Pancreas (tissue), 10 donors: ENCODE measurements at regions of chr22 and their contacts with region 1.

Region 1: GRCh38 chr22:39319270-39320022 is at the start of gene RPL3:
- DNase-seq: peak; percentile 93 to 98 (median 98)
- ATAC-seq: peak; percentile 78 to 88 (median 82)
- H3K4me3 ChIP-seq: peak within 1 kb of the TSS; percentile 57 to 84 (median 77)
- H3K27ac ChIP-seq: peak within 1 kb of the TSS; percentile 92 to 100 (median 96)
- H3K4me1 ChIP-seq: peaks cover 0 to 31% (median 25%) of the 10 kb centered on the region in 3 donors
- H3K27me3 ChIP-seq: no peaks in the 10 kb centered on the region
- CTCF ChIP-seq: peak in 1 of 4 donors; percentile 7
- total RNA-seq, gene RPL3: 1,199 to 2,601 (median 1,706) TPM

Region 2: GRCh38 chr22:39364714-39365491 is 45.5 kb after region 1 on chr22:
- intact Hi-C with region 1: no loop called
- DNase-seq: no peak
- ATAC-seq: peak in 1 of 4 donors; percentile 14
- H3K4me3 ChIP-seq: no peak overlapping the region
- H3K27ac ChIP-seq: no peak overlapping the region
- H3K4me1 ChIP-seq: no peaks in the 10 kb centered on the region
- H3K27me3 ChIP-seq: no peaks in the 10 kb centered on the region
- CTCF ChIP-seq: no peak

Region 3: DNA sequence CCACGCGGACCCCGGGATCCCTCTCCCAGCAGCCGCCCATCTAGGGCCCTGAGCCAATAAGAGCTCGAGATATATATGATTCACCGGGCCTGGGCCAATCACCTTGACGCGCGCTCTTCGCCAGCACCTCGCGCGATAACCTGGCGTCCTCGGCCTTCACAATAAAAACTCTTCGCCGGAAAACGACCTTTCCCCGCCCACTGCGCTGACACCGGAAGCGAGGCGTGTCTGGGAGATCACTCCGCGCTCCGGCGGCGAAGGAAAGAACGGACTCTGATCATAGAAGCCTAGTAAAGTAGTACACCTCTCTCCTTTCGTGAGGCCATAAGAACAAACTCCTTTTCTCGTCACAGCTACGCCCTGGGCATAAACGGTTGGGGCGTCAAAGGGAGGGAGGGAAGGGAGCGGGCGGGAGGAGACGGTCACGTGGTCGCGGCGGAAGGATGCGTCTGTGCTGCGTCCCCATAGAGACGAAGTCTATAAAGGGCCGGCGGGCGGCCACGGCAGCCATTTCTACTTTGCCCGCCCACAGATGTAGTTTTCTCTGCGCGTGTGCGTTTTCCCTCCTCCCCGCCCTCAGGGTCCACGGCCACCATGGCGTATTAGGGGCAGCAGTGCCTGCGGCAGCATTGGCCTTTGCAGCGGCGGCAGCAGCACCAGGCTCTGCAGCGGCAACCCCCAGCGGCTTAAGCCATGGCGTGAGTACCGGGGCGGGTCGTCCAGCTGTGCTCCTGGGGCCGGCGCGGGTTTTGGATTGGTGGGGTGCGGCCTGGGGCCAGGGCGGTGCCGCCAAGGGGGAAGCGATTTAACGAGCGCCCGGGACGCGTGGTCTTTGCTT is 200.8 kb after region 1 on chr22 and contains the start of gene ATF4:
- intact Hi-C with region 1: loop called in 1 of 3 experiments (anchors 10 kb)
- DNase-seq: peak; percentile 95 to 99 (median 98)
- ATAC-seq: peak; percentile 85 to 93 (median 86)
- H3K4me3 ChIP-seq: peak within 1 kb of the TSS; percentile 97 to 100 (median 99)
- H3K27ac ChIP-seq: peak within 1 kb of the TSS; percentile 94 to 99 (median 97)
- H3K4me1 ChIP-seq: peaks cover 3 to 22% (median 7%) of the 10 kb centered on the region in 3 donors
- H3K27me3 ChIP-seq: no peaks in the 10 kb centered on the region
- CTCF ChIP-seq: no peak
- total RNA-seq, gene ATF4: 155 to 472 (median 217) TPM